Common myeloid progenitor, CD34-positive (primary cell): ENCODE measurements at regions of chr6 and their contacts with region 1.

Region 1: GRCh38 chr6:12483712-12484111 is 193.6 kb downstream of the EDN1 start:
- DNase-seq: peak; percentile 60 to 93 (median 90)
- H3K4me3 ChIP-seq: peak overlapping the region in 6 of 7 experiments; percentile 2 to 64 (median 56)
- H3K27ac ChIP-seq: peak overlapping the region; percentile 21 to 47
- H3K4me1 ChIP-seq: peaks cover 9 to 27% (median 20%) of the 10 kb centered on the region in 4 experiments
- H3K27me3 ChIP-seq: no peaks in the 10 kb centered on the region

Region 2: DNA sequence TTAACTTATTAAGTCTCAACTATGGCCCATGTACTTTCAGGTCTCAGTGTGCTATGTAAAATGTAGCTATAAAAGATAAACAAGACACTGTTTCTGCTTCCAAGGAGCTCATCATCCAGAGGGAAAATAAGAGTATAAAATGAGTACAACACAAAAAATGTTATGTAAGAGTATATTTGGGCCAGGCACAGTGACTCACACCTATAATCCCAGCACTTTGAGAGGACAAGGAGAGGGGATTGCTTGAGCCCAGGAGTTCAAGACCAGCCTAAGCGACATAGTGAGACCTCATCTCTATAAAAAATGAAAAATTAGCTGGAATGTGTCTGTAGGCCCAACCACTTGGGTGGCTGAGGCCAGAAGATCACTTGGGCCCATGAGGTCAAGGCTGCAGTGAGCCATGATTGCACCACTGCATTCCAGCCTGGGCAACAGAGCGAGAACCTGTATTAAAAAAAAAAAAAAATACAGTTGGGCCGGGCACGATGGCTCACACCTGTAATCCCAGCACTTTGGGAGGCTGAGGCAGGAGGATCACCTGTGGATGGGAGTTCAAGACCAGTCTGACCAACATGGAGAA is 69.5 kb before region 1 on chr6:
- CTCF ChIA-PET with region 1: no interaction called
- POLR2A ChIA-PET with region 1: no interaction called
- DNase-seq: no peak
- H3K4me3 ChIP-seq: no peak overlapping the region
- H3K27ac ChIP-seq: no peak overlapping the region
- H3K4me1 ChIP-seq: peaks cover 0 to 3% (median 0%) of the 10 kb centered on the region in 4 experiments
- H3K27me3 ChIP-seq: no peaks in the 10 kb centered on the region

Region 3: GRCh38 chr6:12446394-12446793 is 37.3 kb before region 1 on chr6:
- CTCF ChIA-PET with region 1: no interaction called
- POLR2A ChIA-PET with region 1: no interaction called
- DNase-seq: peak in 2 of 3 donors; percentile 47 to 58
- H3K4me3 ChIP-seq: no peak overlapping the region
- H3K27ac ChIP-seq: no peak overlapping the region
- H3K4me1 ChIP-seq: peaks cover 0 to 5% (median 0%) of the 10 kb centered on the region in 4 experiments
- H3K27me3 ChIP-seq: no peaks in the 10 kb centered on the region

Region 4: GRCh38 chr6:12472601-12473038 is 11.1 kb before region 1 on chr6:
- CTCF ChIA-PET with region 1: interaction called, 10 read pairs
- POLR2A ChIA-PET with region 1: no interaction called
- DNase-seq: peak in 1 of 3 donors; percentile 29
- H3K4me3 ChIP-seq: no peak overlapping the region
- H3K27ac ChIP-seq: no peak overlapping the region
- H3K4me1 ChIP-seq: no peaks in the 10 kb centered on the region
- H3K27me3 ChIP-seq: no peaks in the 10 kb centered on the region

Region 5: GRCh38 chr6:12992770-12993169 is 509.1 kb after region 1 on chr6:
- CTCF ChIA-PET with region 1: no interaction called
- POLR2A ChIA-PET with region 1: no interaction called
- DNase-seq: no peak
- H3K4me3 ChIP-seq: no peak overlapping the region
- H3K27ac ChIP-seq: no peak overlapping the region
- H3K4me1 ChIP-seq: no peaks in the 10 kb centered on the region
- H3K27me3 ChIP-seq: no peaks in the 10 kb centered on the region